Prostate gland (tissue), 2 donors: ENCODE measurements at regions of chr12 and their contacts with region 1.

Region 1: GRCh38 chr12:2179953-2180736 is 127.4 kb downstream of the CACNA1C start:
- DNase-seq: peak; percentile 18
- H3K4me3 ChIP-seq: no peak overlapping the region
- H3K27ac ChIP-seq: peak overlapping the region; percentile 20 to 27
- H3K4me1 ChIP-seq: no peaks in the 10 kb centered on the region
- H3K27me3 ChIP-seq: no peaks in the 10 kb centered on the region
- CTCF ChIP-seq: no peak
- POLR2A ChIP-seq: no peak

Region 2: GRCh38 chr12:2013527-2014223 is 166.5 kb before region 1 on chr12:
- intact Hi-C with region 1: no loop called
- DNase-seq: no peak
- H3K4me3 ChIP-seq: no peak overlapping the region
- H3K27ac ChIP-seq: peak overlapping the region; percentile 38 to 40
- H3K4me1 ChIP-seq: no peaks in the 10 kb centered on the region
- H3K27me3 ChIP-seq: no peaks in the 10 kb centered on the region
- CTCF ChIP-seq: no peak
- POLR2A ChIP-seq: no peak

Region 3: GRCh38 chr12:2291182-2291832 is 111.2 kb after region 1 on chr12:
- intact Hi-C with region 1: no loop called
- DNase-seq: no peak
- H3K4me3 ChIP-seq: no peak overlapping the region
- H3K27ac ChIP-seq: no peak overlapping the region
- H3K4me1 ChIP-seq: peaks cover under 1% of the 10 kb centered on the region
- H3K27me3 ChIP-seq: no peaks in the 10 kb centered on the region
- CTCF ChIP-seq: peak; percentile 51 to 58 (median 54)
- POLR2A ChIP-seq: no peak

Region 4: DNA sequence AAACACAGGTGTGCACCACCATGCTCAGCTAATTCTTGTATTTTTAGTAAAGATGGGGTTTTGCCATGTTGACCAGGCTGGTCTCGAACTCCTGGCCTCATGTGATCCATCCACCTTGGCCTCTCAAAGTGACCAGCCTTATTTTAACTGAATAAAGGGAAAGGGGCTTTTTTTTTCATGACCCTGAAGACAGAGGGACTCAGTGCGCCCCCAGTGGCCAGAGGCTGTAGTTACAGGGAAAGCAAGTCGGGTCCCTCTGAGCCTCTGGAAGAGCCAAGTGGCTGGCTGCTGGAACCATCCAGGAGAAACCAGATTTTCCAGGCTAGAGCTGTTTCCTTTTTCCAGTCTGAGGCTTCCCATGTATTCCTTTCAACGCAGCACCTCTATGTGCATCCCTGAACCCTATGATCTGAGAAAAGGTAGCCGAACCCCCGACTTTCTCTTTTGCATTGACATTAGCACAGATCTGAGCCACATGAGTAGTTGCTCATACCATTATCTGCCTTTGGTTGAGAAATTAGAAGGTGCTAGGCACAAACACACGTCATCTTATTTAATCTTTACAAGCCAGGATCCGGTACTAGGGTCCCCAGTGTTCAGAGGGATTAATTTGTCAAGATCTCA is 215.3 kb after region 1 on chr12:
- intact Hi-C with region 1: loop called (anchors 10 kb)
- DNase-seq: no peak
- H3K4me3 ChIP-seq: no peak overlapping the region
- H3K27ac ChIP-seq: no peak overlapping the region
- H3K4me1 ChIP-seq: no peaks in the 10 kb centered on the region
- H3K27me3 ChIP-seq: no peaks in the 10 kb centered on the region
- CTCF ChIP-seq: peak in 3 of 4 experiments; percentile 44 to 52 (median 44)
- POLR2A ChIP-seq: no peak